Psoas muscle (tissue), 8 donors: ENCODE measurements at regions of chr9 and their contacts with region 1.

Region 1: DNA sequence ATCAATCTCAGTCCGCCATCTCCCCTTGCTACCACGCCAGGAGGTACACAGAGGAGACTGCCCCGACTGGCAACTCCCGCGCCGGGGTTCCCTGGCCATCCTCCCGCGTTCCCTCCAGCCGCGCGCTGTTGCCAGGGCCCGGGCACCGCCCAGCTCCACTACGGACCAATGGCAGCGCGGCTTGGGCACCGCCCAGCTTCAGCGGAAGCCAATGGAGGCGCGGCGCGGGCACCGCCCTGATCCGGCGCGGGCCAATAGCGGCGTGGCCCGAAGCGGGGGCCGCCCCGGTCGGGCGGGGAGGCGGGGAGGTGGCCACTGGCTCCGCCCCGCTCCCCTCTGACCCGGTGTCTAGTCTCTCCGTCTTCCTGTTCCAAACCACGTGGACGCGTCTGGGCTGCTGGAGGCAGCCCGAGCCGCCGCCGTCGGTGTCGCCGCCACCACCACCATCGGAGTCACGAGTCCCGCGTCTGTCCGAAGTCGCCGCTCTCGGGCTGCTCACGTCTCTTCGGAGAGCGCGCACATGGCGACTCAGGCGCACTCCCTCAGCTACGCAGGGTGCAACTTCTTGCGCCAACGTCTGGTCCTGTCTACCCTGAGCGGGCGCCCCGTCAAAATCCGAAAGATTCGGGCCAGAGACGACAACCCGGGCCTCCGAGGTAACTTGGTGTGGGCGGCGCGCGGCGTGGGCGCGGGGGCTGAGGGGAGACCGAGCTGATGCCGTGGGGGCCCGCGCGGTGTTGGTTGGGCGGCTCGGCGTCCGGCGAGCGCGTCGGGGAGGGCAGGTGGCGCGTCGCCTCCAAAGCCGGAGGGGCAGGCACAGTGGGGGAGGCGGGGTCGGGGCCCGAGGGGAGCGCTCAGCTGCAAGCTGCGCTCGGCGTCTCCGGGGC is at the start of gene RCL1:
- DNase-seq: peak; percentile 96 to 98
- ATAC-seq: peak; percentile 94 to 98 (median 96)
- H3K4me3 ChIP-seq: peak within 1 kb of the TSS; percentile 78
- H3K27ac ChIP-seq: peak within 1 kb of the TSS; percentile 96
- H3K4me1 ChIP-seq: peaks cover 29% of the 10 kb centered on the region
- H3K27me3 ChIP-seq: no peaks in the 10 kb centered on the region
- CTCF ChIP-seq: no peak
- total RNA-seq, gene RCL1: 16.0 to 29.5 (median 17.9) TPM

Region 2: GRCh38 chr9:4837261-4838188 is 44.7 kb after region 1 on chr9:
- intact Hi-C with region 1: loop called in 1 of 2 experiments (anchors 5 kb)
- DNase-seq: peak in 1 of 2 donors; percentile 19
- ATAC-seq: peak in 2 of 4 donors; percentile 9 to 15
- H3K4me3 ChIP-seq: no peak overlapping the region
- H3K27ac ChIP-seq: peak overlapping the region; percentile 34
- H3K4me1 ChIP-seq: peaks cover 29% of the 10 kb centered on the region
- H3K27me3 ChIP-seq: no peaks in the 10 kb centered on the region
- CTCF ChIP-seq: no peak